ENCODE measurements at regions of chr11 and their contacts with region 1.

Region 1: GRCh38 chr11:114762408-114762807 is 84.1 kb downstream of the NXPE2 start:
- DNase-seq: peak; percentile 62
- H3K4me3 ChIP-seq: no peak overlapping the region
- H3K27ac ChIP-seq: no peak overlapping the region
- H3K4me1 ChIP-seq: no peaks in the 10 kb centered on the region
- H3K27me3 ChIP-seq: no peaks in the 10 kb centered on the region
- CTCF ChIP-seq: peak; percentile 79

Region 2: GRCh38 chr11:114280696-114281095 is 481.7 kb before region 1 on chr11:
- CTCF ChIA-PET with region 1: no interaction called
- POLR2A ChIA-PET with region 1: no interaction called
- intact Hi-C with region 1: loop called (anchors 1 kb)
- DNase-seq: peak; percentile 67
- H3K4me3 ChIP-seq: no peak overlapping the region
- H3K27ac ChIP-seq: no peak overlapping the region
- H3K4me1 ChIP-seq: no peaks in the 10 kb centered on the region
- H3K27me3 ChIP-seq: no peaks in the 10 kb centered on the region
- CTCF ChIP-seq: peak; percentile 65

Region 3: DNA sequence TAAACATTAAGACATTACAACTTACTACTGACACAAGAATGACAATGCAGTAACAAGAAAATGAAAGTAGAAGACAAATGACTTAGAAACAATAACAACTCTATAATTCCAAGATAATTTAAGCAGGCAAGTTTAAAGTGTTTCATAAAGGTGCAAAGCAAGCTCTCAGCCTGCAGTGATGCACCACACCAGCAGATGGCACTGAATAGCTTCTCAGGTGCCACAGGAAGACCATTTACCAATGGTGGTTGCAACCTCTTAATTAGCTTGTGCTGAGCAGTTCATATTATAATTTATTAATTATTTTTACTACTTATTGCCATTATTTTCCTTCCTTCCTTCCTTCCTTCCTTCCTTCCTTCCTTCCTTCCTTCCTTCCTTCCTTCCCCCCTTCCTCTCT is 23.5 kb before region 1 on chr11:
- CTCF ChIA-PET with region 1: interaction called, 13 read pairs
- POLR2A ChIA-PET with region 1: no interaction called
- intact Hi-C with region 1: no loop called
- DNase-seq: peak; percentile 62
- H3K4me3 ChIP-seq: no peak overlapping the region
- H3K27ac ChIP-seq: no peak overlapping the region
- H3K4me1 ChIP-seq: no peaks in the 10 kb centered on the region
- H3K27me3 ChIP-seq: no peaks in the 10 kb centered on the region
- CTCF ChIP-seq: peak; percentile 91

Measured in A673 (cell line).